ENCODE measurements at regions of chr2 and their contacts with region 1.

Region 1: GRCh38 chr2:44167940-44168680 is 565 bp upstream of the PPM1B start:
- DNase-seq: peak; percentile 99

Region 2: DNA sequence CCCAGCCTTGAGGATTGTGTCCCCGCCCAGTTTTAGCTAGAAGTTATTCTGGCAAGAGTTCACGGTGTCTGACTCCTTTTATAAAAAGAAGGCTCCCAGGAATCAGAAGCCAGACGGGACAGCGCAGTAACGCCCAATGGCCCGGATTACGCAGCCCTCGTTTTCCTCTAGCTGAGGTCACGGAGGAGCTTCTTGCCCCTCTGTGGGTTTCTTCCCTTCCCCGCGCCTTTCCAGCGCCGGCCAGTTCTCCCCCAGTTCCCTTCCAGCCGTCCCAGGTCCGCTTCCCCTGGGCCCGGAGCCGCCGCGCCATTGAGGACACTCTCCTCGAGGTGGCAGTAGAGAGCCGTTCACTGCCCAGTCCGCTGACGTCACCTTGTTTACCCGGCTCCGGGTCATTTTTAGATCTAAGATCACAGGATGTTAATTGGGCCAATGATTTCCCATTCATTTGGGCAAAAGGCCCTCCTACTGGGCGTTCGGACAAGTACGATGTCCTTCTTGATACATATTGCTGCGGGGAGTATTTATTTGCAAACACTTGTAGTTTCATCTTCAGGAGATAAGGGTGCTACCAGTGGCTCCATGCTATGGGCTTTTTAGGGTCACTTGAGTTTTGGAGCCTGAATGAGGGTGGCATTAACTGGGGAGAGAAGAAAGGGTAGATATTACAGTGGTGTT is 80.9 kb before region 1 on chr2:
- intact Hi-C with region 1: loop called in 1 of 2 experiments (anchors 10 kb)
- DNase-seq: peak; percentile 96

Region 3: DNA sequence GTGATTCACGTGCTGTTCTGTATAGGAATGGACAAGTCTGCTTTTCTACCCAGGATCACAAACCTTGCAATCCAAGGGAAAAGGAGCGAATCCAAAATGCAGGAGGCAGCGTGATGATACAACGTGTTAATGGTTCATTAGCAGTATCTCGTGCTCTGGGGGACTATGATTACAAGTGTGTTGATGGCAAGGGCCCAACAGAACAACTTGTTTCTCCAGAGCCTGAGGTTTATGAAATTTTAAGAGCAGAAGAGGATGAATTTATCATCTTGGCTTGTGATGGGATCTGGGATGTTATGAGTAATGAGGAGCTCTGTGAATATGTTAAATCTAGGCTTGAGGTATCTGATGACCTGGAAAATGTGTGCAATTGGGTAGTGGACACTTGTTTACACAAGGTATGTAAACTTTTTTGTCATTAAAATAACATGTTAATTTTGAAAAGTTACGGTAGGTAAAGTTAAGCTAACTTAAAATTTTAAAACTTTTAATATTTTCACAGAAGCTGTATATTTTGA is 33.6 kb after region 1 on chr2:
- intact Hi-C with region 1: no loop called
- DNase-seq: no peak

Region 4: DNA sequence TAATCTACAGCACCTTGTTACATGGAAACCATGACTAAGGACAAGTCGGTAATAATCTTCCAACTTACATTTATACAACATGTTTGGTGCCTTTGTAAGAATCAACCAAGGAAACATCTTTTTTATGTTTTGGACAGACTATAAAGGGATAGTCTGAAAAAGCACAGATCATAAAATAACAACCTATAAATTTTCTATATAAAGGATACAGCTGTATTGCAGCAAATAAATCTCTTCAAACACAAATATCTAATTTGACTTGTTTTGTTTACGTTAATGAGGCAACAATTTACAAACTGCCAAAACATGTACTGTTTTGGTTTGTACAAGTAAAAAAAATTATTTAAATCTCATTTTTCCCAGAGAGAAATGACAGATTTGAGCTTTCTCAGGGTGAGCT is 1350.4 kb after region 1 on chr2:
- intact Hi-C with region 1: loop called in 1 of 2 experiments (anchors 5 kb)
- DNase-seq: no peak